Transverse colon (tissue), 4 donors: ENCODE measurements at regions of chr14 and their contacts with region 1.

Region 1: GRCh38 chr14:96268431-96269358 is 12.7 kb downstream of the BDKRB1 start:
- DNase-seq: peak; percentile 58
- H3K4me3 ChIP-seq: no peak overlapping the region
- H3K27ac ChIP-seq: peak overlapping the region; percentile 14 to 74 (median 59)
- H3K4me1 ChIP-seq: peaks cover 0 to 19% (median 6%) of the 10 kb centered on the region in 4 donors
- H3K27me3 ChIP-seq: no peaks in the 10 kb centered on the region
- CTCF ChIP-seq: no peak
- EP300 ChIP-seq: no peak
- POLR2A ChIP-seq: no peak

Region 2: GRCh38 chr14:94827711-94828447 is 1440.8 kb before region 1 on chr14:
- in situ Hi-C with region 1: no loop called
- intact Hi-C with region 1: no loop called
- DNase-seq: peak; percentile 31
- H3K4me3 ChIP-seq: no peak overlapping the region
- H3K27ac ChIP-seq: peak overlapping the region in 2 of 4 donors; percentile 47 to 67
- H3K4me1 ChIP-seq: peaks cover 0 to 7% (median 0%) of the 10 kb centered on the region in 4 donors
- H3K27me3 ChIP-seq: no peaks in the 10 kb centered on the region
- CTCF ChIP-seq: no peak
- EP300 ChIP-seq: no peak
- POLR2A ChIP-seq: no peak

Region 3: GRCh38 chr14:96027431-96028355 is 241.0 kb before region 1 on chr14:
- in situ Hi-C with region 1: no loop called
- intact Hi-C with region 1: loop called (anchors 10 kb)
- DNase-seq: no peak
- H3K4me3 ChIP-seq: no peak overlapping the region
- H3K27ac ChIP-seq: no peak overlapping the region
- H3K4me1 ChIP-seq: no peaks in the 10 kb centered on the region
- H3K27me3 ChIP-seq: peaks cover 5% of the 10 kb centered on the region
- CTCF ChIP-seq: no peak
- EP300 ChIP-seq: no peak
- POLR2A ChIP-seq: no peak

Region 4: DNA sequence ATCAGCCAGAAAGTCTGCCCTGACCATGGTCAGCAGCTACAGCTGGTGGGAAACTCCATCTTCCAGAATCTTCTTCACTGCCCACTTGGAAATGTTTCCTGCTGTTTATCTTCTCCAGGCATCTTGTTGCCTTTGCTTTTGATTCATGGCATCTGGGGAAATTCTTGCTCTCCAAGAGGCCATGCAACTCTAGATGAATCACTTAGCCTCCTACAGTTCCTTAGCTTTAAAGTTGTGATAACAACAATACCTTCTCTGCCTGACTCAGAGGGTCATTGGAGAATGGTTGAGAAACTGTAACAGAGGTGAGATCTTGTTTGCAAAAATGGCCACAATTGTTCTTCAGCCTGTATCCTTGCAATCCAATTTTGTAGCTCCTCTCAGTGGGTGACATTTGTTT is 407.5 kb after region 1 on chr14:
- in situ Hi-C with region 1: no loop called
- intact Hi-C with region 1: no loop called
- DNase-seq: no peak
- H3K4me3 ChIP-seq: no peak overlapping the region
- H3K27ac ChIP-seq: no peak overlapping the region
- H3K4me1 ChIP-seq: no peaks in the 10 kb centered on the region
- H3K27me3 ChIP-seq: no peaks in the 10 kb centered on the region
- CTCF ChIP-seq: no peak
- EP300 ChIP-seq: no peak
- POLR2A ChIP-seq: no peak

Region 5: DNA sequence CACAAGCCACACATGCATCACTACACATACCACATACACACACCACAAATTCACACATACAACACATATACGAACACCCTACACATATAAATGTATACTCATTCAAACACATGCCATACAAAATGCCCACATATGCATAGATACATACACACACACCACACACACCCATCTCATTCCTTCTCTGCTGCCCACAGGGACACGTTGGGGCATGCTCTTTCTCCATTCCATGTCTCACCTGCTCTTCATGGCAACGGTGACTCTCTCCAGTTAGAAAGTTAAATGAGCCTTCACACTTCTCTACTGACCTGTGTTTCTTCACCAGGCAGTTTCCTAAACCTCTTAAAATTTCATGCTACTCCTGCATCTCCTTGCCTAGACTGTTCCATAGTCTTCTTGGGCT is 1808.5 kb after region 1 on chr14:
- in situ Hi-C with region 1: no loop called
- intact Hi-C with region 1: no loop called
- DNase-seq: no peak
- H3K4me3 ChIP-seq: no peak overlapping the region
- H3K27ac ChIP-seq: no peak overlapping the region
- H3K4me1 ChIP-seq: no peaks in the 10 kb centered on the region
- H3K27me3 ChIP-seq: no peaks in the 10 kb centered on the region
- CTCF ChIP-seq: no peak
- EP300 ChIP-seq: no peak
- POLR2A ChIP-seq: no peak